ENCODE measurements at regions of chr9 and their contacts with region 1.

Region 1: DNA sequence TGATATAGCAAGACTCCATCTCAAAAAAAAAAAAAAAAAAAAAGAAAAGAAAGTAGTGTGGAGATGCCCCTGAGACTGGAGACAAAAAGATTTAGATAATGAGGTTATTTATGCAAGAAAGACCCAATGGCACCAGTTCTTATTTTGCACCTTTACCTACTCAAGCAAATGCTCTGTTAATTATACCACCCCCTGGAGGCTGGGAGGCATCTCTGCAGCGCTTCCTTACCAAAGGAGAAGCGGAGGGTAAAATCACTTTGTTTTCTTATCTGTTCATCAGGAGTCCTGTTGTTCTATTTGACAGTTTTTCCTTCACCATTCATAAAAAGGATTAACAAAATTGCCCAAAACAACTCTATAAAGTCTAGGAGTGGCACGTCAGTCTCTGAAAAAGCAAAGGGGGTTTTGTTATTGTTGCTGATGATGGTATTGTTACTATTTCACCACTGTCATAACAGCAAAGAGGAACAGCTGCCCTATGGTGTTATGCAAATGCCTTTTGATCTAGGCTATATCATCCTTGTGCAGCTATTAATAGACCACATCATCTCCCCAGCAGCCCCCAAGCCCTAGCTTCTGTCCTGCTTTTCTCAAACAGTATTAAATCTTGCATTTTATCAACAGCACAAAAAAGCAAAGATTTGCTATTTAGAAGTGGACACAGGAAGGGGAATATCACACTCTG is 174.0 kb downstream of the PALM2AKAP2 start:
- DNase-seq: peak; percentile 83
- H3K4me3 ChIP-seq: peak overlapping the region; percentile 39
- H3K27ac ChIP-seq: peak overlapping the region; percentile 86
- H3K4me1 ChIP-seq: peaks cover 98% of the 10 kb centered on the region
- CTCF ChIP-seq: peak; percentile 90

Region 2: DNA sequence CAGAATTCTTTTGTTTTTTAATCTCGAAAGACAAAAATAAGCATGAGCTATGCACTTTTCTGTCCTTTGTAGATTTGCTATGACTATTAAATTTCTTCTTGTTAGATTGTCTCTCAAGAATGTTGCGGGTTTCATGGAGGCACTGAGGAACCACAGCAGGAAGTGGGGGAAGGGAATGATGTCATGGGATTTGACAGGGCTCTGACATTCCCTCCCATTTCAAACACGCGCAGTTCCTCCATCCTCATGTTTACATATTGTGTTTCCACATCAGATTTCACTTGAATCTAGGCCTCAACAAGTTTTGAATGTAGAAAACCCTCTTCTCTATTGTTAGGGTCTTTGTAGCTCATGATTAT is 19.1 kb before region 1 on chr9:
- CTCF ChIA-PET with region 1: interaction called, 3 read pairs
- POLR2A ChIA-PET with region 1: interaction called, 14 read pairs
- intact Hi-C with region 1: no loop called
- DNase-seq: no peak
- H3K4me3 ChIP-seq: no peak overlapping the region
- H3K27ac ChIP-seq: no peak overlapping the region
- H3K4me1 ChIP-seq: peaks cover 30% of the 10 kb centered on the region
- CTCF ChIP-seq: no peak

Region 3: GRCh38 chr9:109940561-109940960 is 13.4 kb before region 1 on chr9:
- CTCF ChIA-PET with region 1: no interaction called
- POLR2A ChIA-PET with region 1: interaction called, 15 read pairs
- intact Hi-C with region 1: no loop called
- DNase-seq: no peak
- H3K4me3 ChIP-seq: no peak overlapping the region
- H3K27ac ChIP-seq: no peak overlapping the region
- H3K4me1 ChIP-seq: peaks cover 25% of the 10 kb centered on the region
- CTCF ChIP-seq: no peak

Region 4: GRCh38 chr9:109972026-109972882 is 18.3 kb after region 1 on chr9:
- CTCF ChIA-PET with region 1: interaction called, 48 read pairs
- POLR2A ChIA-PET with region 1: interaction called, 173 read pairs
- intact Hi-C with region 1: no loop called
- DNase-seq: peak; percentile 94
- H3K4me3 ChIP-seq: peak overlapping the region; percentile 37
- H3K27ac ChIP-seq: peak overlapping the region; percentile 98
- H3K4me1 ChIP-seq: peaks cover 100% of the 10 kb centered on the region
- CTCF ChIP-seq: peak; percentile 87

Region 5: GRCh38 chr9:110170357-110171257 is 216.7 kb after region 1 on chr9:
- CTCF ChIA-PET with region 1: no interaction called
- POLR2A ChIA-PET with region 1: no interaction called
- intact Hi-C with region 1: no loop called
- DNase-seq: no peak
- H3K4me3 ChIP-seq: no peak overlapping the region
- H3K27ac ChIP-seq: no peak overlapping the region
- H3K4me1 ChIP-seq: no peaks in the 10 kb centered on the region
- CTCF ChIP-seq: no peak

Measured in OCI-LY7 (cell line).